Activated CD8-positive, alpha-beta T cell treated with anti-CD3 and anti-CD28 coated beads for 36 hours (primary cell): ENCODE measurements at regions of chr2 and their contacts with region 1.

Region 1: DNA sequence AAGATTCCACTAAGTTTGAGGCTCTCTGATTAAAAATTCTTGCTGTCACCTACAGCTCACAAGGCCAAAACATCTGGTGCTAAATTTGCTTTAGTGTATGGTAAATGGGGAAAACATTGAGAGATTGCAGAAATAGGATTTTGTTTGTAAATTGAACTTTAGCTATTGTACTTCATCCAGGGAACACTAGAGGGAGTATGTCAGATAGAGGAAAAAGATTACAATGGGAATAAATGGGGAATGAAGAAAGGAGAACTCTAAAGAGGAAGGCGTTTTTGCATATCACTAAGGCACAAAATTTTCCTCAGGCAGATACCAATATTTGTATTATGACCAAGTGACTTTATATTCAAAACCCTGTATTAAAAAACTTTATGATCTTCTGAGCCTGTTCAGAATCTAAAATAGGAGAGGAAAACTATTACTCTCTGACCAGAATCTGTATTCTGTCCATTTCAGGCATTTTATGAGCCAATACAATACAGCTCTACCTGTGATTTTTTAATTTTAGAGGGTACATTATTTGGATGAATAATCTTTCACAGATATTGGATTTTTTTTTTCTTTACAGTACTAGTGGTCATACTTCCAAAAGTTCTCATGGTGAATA is 52.3 kb upstream of the ITGB6 start:
- DNase-seq: no peak
- ATAC-seq: no peak
- H3K4me3 Mint-ChIP-seq: no peak overlapping the region
- H3K27ac Mint-ChIP-seq: no peak overlapping the region
- H3K4me1 Mint-ChIP-seq: no peaks in the 10 kb centered on the region
- H3K27me3 Mint-ChIP-seq: no peaks in the 10 kb centered on the region
- CTCF ChIP-seq: peak; percentile 79

Region 2: GRCh38 chr2:160241251-160242137 is 10.9 kb before region 1 on chr2:
- CTCF ChIA-PET with region 1: interaction called, 13 read pairs
- POLR2A ChIA-PET with region 1: no interaction called
- intact Hi-C with region 1: no loop called
- DNase-seq: no peak
- ATAC-seq: no peak
- H3K4me3 Mint-ChIP-seq: no peak overlapping the region
- H3K27ac Mint-ChIP-seq: no peak overlapping the region
- H3K4me1 Mint-ChIP-seq: no peaks in the 10 kb centered on the region
- H3K27me3 Mint-ChIP-seq: no peaks in the 10 kb centered on the region
- CTCF ChIP-seq: no peak

Region 3: GRCh38 chr2:160269803-160270570 is 17.6 kb after region 1 on chr2:
- CTCF ChIA-PET with region 1: interaction called, 12 read pairs
- POLR2A ChIA-PET with region 1: no interaction called
- intact Hi-C with region 1: no loop called
- DNase-seq: peak; percentile 80
- ATAC-seq: peak; percentile 73
- H3K4me3 Mint-ChIP-seq: peak overlapping the region; percentile 63
- H3K27ac Mint-ChIP-seq: peak overlapping the region; percentile 84
- H3K4me1 Mint-ChIP-seq: peaks cover 45% of the 10 kb centered on the region
- H3K27me3 Mint-ChIP-seq: peaks cover 2% of the 10 kb centered on the region
- CTCF ChIP-seq: peak; percentile 71

Region 4: DNA sequence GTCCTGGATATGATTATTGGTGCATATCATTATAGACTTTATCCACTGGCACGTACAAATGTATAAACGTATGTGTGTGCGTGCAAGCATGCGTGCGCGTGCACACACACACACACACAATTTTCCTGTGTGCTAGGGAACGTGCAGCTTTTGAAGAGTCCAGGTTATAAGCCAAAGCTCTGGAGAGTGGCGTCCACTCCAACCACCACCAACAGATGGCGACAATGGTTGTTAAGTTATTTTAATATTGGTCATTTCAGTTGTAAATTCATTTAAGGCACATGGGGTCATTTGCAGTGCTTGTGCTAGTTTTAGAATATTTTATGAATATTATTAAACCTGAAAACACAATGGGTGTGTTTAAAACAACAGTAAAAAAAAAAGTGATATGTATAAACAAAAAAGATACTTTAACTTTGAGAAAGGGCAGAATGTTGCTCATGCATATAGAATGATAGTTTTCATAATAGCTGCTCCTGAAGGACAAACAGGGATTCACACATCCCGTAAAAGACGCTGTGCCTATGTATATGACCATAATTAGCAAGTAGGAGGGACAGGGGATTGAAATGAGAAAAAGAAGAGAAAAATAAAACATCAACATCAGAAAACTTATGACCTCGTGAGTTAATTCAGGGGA is 71.9 kb after region 1 on chr2:
- CTCF ChIA-PET with region 1: interaction called, 14 read pairs
- POLR2A ChIA-PET with region 1: no interaction called
- intact Hi-C with region 1: no loop called
- DNase-seq: peak; percentile 74
- ATAC-seq: no peak
- H3K4me3 Mint-ChIP-seq: no peak overlapping the region
- H3K27ac Mint-ChIP-seq: no peak overlapping the region
- H3K4me1 Mint-ChIP-seq: peaks cover 81% of the 10 kb centered on the region
- H3K27me3 Mint-ChIP-seq: no peaks in the 10 kb centered on the region
- CTCF ChIP-seq: peak; percentile 77

Region 5: DNA sequence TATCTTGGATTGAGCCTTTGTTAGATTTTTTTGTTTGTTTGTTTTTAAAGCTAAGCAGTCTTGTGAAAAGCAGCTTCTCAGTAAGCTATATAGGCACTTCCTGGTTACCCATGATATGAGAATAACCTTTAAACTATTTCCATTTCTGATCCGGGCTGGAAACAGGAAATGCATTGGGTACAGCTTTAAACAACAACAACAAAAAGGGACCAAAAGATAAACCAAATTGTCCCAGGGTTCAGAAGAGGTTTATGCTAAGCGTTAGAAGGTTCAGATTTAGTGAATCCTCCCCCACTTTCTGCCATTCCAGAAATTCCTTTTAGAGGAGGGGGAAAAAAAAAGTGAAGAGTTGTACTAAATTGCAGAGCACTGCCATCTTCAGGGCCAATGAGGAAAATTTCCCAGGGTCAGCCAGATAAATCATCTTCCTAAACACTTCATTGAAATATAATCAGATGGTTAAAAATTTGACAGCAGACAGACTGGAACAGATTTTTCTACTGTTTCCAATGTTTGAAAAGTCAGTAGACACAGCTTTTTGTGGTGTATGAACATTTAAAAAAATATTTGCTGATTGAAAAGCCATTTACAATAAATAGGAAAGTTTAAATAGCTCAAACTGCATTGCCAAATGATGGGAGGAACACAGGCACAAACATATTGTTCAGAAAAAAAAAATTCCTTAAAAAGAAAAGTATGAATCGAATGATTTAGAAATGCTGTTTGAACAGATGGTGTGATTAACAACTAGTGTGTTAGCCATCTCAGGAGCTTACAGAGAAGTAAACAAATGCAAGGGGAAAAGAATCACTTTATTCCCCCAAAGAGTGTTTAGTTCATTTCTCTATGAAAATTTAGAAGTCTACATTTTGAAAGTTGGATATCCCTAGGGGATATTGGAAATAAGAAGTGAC is 717.9 kb after region 1 on chr2:
- CTCF ChIA-PET with region 1: interaction called, 15 read pairs
- POLR2A ChIA-PET with region 1: no interaction called
- intact Hi-C with region 1: no loop called
- DNase-seq: peak; percentile 21
- ATAC-seq: no peak
- H3K4me3 Mint-ChIP-seq: no peak overlapping the region
- H3K27ac Mint-ChIP-seq: no peak overlapping the region
- H3K4me1 Mint-ChIP-seq: no peaks in the 10 kb centered on the region
- H3K27me3 Mint-ChIP-seq: peaks cover 1% of the 10 kb centered on the region
- CTCF ChIP-seq: peak; percentile 47